Naive thymus-derived CD4-positive, alpha-beta T cell (primary cell): ENCODE measurements at regions of chr1 and their contacts with region 1.

Region 1: GRCh38 chr1:29017235-29017634 is 102.9 kb downstream of the EPB41 start:
- DNase-seq: no peak
- ATAC-seq: no peak
- H3K4me3 ChIP-seq: no peak overlapping the region
- H3K4me3 Mint-ChIP-seq: no peak overlapping the region
- H3K27ac ChIP-seq: no peak overlapping the region
- H3K27ac Mint-ChIP-seq: no peak overlapping the region
- H3K4me1 ChIP-seq: no peaks in the 10 kb centered on the region
- H3K4me1 Mint-ChIP-seq: peaks cover 0 to 8% (median 4%) of the 10 kb centered on the region in 7 donors
- H3K27me3 ChIP-seq: no peaks in the 10 kb centered on the region
- H3K27me3 Mint-ChIP-seq: no peaks in the 10 kb centered on the region

Region 2: DNA sequence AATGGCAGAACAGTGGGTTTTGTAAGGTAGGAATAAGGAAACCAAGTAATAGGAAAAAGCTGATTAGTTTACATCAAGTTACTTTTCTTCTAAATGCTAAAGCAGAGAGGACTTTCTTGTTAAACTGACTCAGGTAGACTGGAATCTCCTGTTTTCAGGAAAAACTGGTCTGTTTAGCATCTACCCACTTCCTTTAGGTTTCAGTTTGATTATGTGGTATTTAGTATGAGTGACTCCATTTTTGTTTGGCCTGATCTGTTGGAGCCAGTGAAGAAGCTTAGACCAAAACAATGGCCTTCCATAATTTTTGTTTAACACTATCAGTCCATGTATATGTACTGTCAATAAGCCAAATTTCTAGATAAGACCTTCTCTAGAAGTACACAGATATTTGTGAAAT is 14.4 kb before region 1 on chr1:
- CTCF ChIA-PET with region 1: interaction called, 3 read pairs
- POLR2A ChIA-PET with region 1: interaction called, 3 read pairs
- intact Hi-C with region 1: loop called in 1 of 2 experiments (anchors 2 kb)
- DNase-seq: no peak
- ATAC-seq: no peak
- H3K4me3 ChIP-seq: no peak overlapping the region
- H3K4me3 Mint-ChIP-seq: no peak overlapping the region
- H3K27ac ChIP-seq: no peak overlapping the region
- H3K27ac Mint-ChIP-seq: peak overlapping the region in 4 of 9 donors; percentile 4 to 38 (median 28)
- H3K4me1 ChIP-seq: no peaks in the 10 kb centered on the region
- H3K4me1 Mint-ChIP-seq: peaks cover 13 to 58% (median 41%) of the 10 kb centered on the region in 7 donors
- H3K27me3 ChIP-seq: no peaks in the 10 kb centered on the region
- H3K27me3 Mint-ChIP-seq: no peaks in the 10 kb centered on the region

Region 3: DNA sequence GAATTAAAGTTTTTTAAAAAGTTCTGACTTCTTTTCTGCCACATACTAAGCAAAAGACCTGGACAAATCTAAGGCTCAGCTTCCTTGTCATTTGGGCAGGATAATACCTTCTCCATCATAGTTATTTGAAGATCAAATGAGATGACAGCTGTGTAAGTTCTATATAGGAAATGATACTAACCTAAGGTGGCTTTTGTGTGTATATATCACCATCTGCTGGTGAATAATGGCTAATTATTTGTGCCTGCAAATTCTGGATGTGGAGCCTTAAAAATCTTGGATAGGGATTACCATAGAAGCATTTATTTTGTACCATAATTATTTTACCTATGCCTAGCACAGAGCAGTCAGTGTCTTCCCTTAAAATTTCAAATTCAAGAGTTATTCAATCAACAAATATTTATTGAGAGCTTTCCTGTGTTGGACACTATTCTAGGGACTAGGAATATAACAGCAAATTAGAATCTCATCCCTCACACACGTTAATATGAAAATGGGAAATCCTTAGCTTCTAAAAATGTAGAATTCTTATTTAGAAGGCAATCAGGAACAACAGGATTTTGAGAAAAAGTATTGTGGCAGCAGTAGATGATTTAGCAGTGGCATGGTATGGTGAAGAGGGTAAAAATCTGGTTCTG is 16.7 kb after region 1 on chr1:
- CTCF ChIA-PET with region 1: interaction called, 8 read pairs
- POLR2A ChIA-PET with region 1: no interaction called
- intact Hi-C with region 1: loop called in 1 of 2 experiments (anchors 2 kb)
- DNase-seq: peak in 7 of 9 donors; percentile 9 to 44 (median 30)
- ATAC-seq: peak; percentile 75
- H3K4me3 ChIP-seq: no peak overlapping the region
- H3K4me3 Mint-ChIP-seq: no peak overlapping the region
- H3K27ac ChIP-seq: no peak overlapping the region
- H3K27ac Mint-ChIP-seq: peak overlapping the region in 3 of 9 donors; percentile 18 to 64 (median 48)
- H3K4me1 ChIP-seq: no peaks in the 10 kb centered on the region
- H3K4me1 Mint-ChIP-seq: peaks cover 0 to 3% (median 0%) of the 10 kb centered on the region in 7 donors
- H3K27me3 ChIP-seq: no peaks in the 10 kb centered on the region
- H3K27me3 Mint-ChIP-seq: no peaks in the 10 kb centered on the region

Region 4: DNA sequence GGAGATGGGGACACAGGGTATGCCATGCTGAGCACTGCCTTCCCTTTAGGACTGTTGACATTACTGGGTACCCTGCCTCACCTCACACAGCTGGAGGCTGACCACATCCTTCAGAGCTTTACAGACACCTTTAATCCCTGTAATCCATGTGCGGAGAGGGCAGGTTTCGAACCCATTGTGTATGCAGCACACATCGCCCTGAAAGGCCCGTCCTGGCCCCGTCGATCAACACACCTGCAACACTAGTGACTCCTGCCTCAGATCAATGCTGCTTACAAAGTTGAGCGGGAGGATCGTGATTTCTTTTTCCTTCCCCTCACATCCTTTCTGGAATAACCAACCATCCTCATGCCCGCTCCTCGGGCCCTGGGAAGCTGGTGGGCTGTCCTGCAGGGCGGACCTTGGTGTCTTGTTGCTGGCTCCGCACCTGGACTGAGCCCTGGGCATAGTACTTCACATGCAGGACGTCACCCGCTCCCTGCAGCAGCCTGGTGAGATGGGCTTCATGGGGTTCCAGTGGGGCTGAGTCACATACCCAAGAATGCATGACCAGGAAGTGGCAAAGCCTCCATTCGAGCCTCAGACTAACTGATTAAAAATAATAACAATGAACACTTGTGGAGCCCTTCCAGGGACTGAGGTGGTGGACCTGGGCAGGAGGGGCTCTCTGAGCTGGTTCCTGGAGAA is 622.6 kb after region 1 on chr1:
- CTCF ChIA-PET with region 1: no interaction called
- POLR2A ChIA-PET with region 1: no interaction called
- intact Hi-C with region 1: no loop called
- DNase-seq: no peak
- ATAC-seq: no peak
- H3K4me3 ChIP-seq: no peak overlapping the region
- H3K4me3 Mint-ChIP-seq: no peak overlapping the region
- H3K27ac ChIP-seq: no peak overlapping the region
- H3K27ac Mint-ChIP-seq: no peak overlapping the region
- H3K4me1 ChIP-seq: no peaks in the 10 kb centered on the region
- H3K4me1 Mint-ChIP-seq: no peaks in the 10 kb centered on the region
- H3K27me3 ChIP-seq: no peaks in the 10 kb centered on the region
- H3K27me3 Mint-ChIP-seq: peaks cover 0 to 27% (median 4%) of the 10 kb centered on the region in 5 donors

Region 5: DNA sequence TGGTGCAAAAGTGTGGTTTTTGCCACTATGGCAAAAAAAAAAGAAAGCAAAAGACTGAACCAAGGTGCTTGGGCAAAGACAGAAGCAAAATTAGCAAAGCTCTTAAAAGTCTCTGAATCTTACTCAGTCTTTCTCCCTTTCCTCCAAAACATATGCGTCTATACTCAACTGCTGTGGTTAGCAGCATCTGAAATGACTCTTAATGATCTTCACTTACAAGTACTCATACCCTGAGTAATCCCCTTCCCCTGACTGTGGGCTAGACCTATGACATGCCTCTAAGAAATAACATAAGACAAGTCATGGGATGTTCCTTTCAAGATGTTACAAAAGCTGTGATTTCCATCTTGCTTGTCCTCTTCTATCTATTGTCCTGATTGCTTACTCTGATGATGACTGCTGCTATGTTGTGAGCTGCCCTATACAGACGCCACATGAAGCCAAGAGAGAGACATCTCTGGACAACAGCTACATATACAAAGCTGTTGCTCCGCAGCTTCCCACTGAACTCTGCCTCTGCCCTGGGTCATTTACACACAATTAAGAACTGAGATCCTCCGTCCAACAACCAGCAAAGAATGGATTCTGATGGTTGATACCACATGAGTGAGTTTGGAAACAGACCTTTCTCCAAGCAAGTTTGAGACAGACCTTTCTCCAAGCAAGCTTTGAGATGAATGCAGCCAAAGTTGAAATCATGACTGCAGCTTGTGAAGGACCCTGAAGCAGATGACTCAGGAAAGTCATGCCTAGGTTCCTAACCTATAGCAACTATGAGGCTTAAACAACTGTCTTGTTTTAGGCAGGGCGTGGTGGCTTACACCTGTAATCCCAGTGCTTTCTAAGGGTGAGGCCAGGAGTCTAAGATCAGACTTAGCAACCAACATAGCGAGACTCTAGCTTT is 1993.1 kb after region 1 on chr1:
- CTCF ChIA-PET with region 1: no interaction called
- POLR2A ChIA-PET with region 1: no interaction called
- intact Hi-C with region 1: no loop called
- DNase-seq: peak in 1 of 9 donors; percentile 10
- ATAC-seq: peak; percentile 56
- H3K4me3 ChIP-seq: no peak overlapping the region
- H3K4me3 Mint-ChIP-seq: peak overlapping the region in 9 of 10 donors; percentile 0 to 42 (median 10)
- H3K27ac ChIP-seq: no peak overlapping the region
- H3K27ac Mint-ChIP-seq: peak overlapping the region in 8 of 9 donors; percentile 3 to 70 (median 34)
- H3K4me1 ChIP-seq: peaks cover 18 to 33% of the 10 kb centered on the region in 2 donors
- H3K4me1 Mint-ChIP-seq: peaks cover 55 to 82% (median 76%) of the 10 kb centered on the region in 7 donors
- H3K27me3 ChIP-seq: no peaks in the 10 kb centered on the region
- H3K27me3 Mint-ChIP-seq: no peaks in the 10 kb centered on the region